PC-9 (cell line): ENCODE measurements at regions of chr5 and their contacts with region 1.

Region 1: DNA sequence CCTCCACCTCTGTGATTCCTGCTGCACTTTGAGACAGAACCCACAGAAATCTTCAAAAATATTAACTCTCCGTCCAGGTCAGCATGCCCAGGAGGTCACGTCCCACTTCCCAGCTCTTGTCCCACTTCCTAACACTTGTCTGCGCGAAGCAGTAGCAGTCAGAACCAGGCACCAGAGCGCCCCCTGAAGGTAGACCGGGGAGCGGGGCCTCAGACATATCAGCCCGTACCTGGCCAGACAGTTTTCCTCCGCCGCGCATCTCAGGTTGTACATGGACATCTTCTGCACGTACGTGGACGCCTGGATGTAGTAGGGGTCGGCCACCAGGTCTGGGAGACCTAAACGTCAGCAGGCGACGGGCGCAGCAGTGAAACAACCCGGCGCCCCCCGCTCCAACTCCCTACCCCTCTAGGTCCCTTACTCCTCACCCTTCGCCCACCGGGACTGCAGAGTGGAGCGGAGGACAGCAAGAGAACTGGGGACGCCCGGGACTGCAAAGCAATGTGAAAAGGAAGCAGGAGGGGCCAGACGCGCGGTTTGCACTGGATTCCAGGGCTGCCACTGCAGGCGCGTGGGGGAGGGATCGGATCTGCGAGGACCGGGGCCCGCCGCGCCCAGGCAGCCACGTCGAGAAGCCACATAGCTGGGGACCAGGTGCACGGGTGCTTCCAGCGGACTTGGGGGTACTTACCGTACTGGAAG is 1.2 kb downstream of the LOX start:
- DNase-seq: peak; percentile 42 to 71
- H3K4me3 ChIP-seq: peak overlapping the region; percentile 89
- H3K27ac ChIP-seq: 0 out of 2 replicates have a peak overlapping the region, but pooled peaks have one; percentile 13
- H3K4me1 ChIP-seq: peaks cover 25% of the 10 kb centered on the region
- H3K27me3 ChIP-seq: no peaks in the 10 kb centered on the region
- CTCF ChIP-seq: peak; percentile 77

Region 2: DNA sequence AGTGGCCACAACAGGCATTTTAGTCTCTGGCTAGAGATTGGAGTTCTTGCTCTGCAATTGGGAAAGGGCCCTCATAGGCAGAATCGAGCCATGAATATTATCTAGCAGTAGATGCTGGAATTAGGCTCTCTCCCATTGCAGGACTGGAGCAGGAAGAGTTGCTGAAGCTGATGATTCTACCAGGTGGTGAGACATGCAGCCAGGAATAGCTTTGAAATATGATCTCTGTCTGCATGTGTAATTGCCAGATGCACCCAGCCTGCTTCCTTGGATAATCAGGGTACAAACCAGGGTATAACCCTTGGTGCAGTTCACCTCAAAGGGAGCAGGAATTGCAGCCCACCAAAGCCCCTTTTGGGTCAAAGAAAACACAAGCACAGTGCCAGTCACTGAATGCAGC is 436.5 kb before region 1 on chr5:
- CTCF ChIA-PET with region 1: no interaction called
- POLR2A ChIA-PET with region 1: no interaction called
- intact Hi-C with region 1: no loop called
- DNase-seq: no peak
- H3K4me3 ChIP-seq: no peak overlapping the region
- H3K27ac ChIP-seq: no peak overlapping the region
- H3K4me1 ChIP-seq: no peaks in the 10 kb centered on the region
- H3K27me3 ChIP-seq: no peaks in the 10 kb centered on the region
- CTCF ChIP-seq: no peak

Region 3: GRCh38 chr5:121962347-121962670 is 114.5 kb before region 1 on chr5:
- CTCF ChIA-PET with region 1: no interaction called
- POLR2A ChIA-PET with region 1: interaction called, 6 read pairs
- intact Hi-C with region 1: loop called (anchors 1 kb)
- DNase-seq: no peak
- H3K4me3 ChIP-seq: peak overlapping the region; percentile 81
- H3K27ac ChIP-seq: peak overlapping the region; percentile 52
- H3K4me1 ChIP-seq: peaks cover 14% of the 10 kb centered on the region
- H3K27me3 ChIP-seq: no peaks in the 10 kb centered on the region
- CTCF ChIP-seq: no peak

Region 4: GRCh38 chr5:121982146-121982892 is 94.5 kb before region 1 on chr5:
- CTCF ChIA-PET with region 1: no interaction called
- POLR2A ChIA-PET with region 1: interaction called, 3 read pairs
- intact Hi-C with region 1: loop called (anchors 5 kb)
- DNase-seq: no peak
- H3K4me3 ChIP-seq: no peak overlapping the region
- H3K27ac ChIP-seq: no peak overlapping the region
- H3K4me1 ChIP-seq: no peaks in the 10 kb centered on the region
- H3K27me3 ChIP-seq: no peaks in the 10 kb centered on the region
- CTCF ChIP-seq: no peak

Region 5: GRCh38 chr5:122129306-122129705 is 52.5 kb after region 1 on chr5 and contains the start of gene ZNF474:
- CTCF ChIA-PET with region 1: no interaction called
- POLR2A ChIA-PET with region 1: no interaction called
- intact Hi-C with region 1: no loop called
- DNase-seq: peak; percentile 75 to 86
- H3K4me3 ChIP-seq: no peak within 1 kb of the TSS
- H3K27ac ChIP-seq: no peak within 1 kb of the TSS
- H3K4me1 ChIP-seq: 0 out of 2 replicates have a peak, but pooled peaks cover 4% of the 10 kb centered on the region
- H3K27me3 ChIP-seq: no peaks in the 10 kb centered on the region
- CTCF ChIP-seq: no peak
- total RNA-seq, gene ZNF474: not detected in 2 replicates

Region 6: GRCh38 chr5:122182491-122182921 is 105.7 kb after region 1 on chr5:
- CTCF ChIA-PET with region 1: no interaction called
- POLR2A ChIA-PET with region 1: no interaction called
- intact Hi-C with region 1: loop called (anchors 2 kb)
- DNase-seq: peak in 1 of 2 experiments; percentile 2
- H3K4me3 ChIP-seq: no peak overlapping the region
- H3K27ac ChIP-seq: no peak overlapping the region
- H3K4me1 ChIP-seq: no peaks in the 10 kb centered on the region
- H3K27me3 ChIP-seq: no peaks in the 10 kb centered on the region
- CTCF ChIP-seq: no peak

Region 7: DNA sequence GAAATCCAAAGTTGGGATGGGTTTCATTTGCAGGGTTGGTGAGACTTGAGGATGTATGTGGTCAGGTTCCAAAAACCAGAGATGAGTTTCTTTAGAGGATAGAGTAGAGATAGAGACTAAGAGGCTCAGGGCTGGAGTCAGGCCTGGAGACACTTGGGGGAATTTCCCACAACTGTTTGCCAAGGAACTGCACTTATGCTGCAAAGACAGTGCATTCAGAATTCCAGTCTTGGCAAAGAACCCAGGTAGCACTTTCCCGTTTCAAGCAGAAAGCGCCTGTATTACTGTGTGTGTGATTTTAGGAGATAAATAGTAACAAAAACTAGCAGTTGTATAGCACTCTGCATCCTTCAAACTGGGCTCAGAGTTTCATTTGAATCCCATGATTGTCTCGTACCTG is 290.6 kb after region 1 on chr5:
- CTCF ChIA-PET with region 1: no interaction called
- POLR2A ChIA-PET with region 1: no interaction called
- intact Hi-C with region 1: no loop called
- DNase-seq: no peak
- H3K4me3 ChIP-seq: no peak overlapping the region
- H3K27ac ChIP-seq: no peak overlapping the region
- H3K4me1 ChIP-seq: no peaks in the 10 kb centered on the region
- H3K27me3 ChIP-seq: no peaks in the 10 kb centered on the region
- CTCF ChIP-seq: no peak

Region 8: GRCh38 chr5:122478741-122479413 is 402.1 kb after region 1 on chr5:
- CTCF ChIA-PET with region 1: no interaction called
- POLR2A ChIA-PET with region 1: no interaction called
- intact Hi-C with region 1: no loop called
- DNase-seq: peak; percentile 3 to 94
- H3K4me3 ChIP-seq: no peak overlapping the region
- H3K27ac ChIP-seq: peak overlapping the region; percentile 56
- H3K4me1 ChIP-seq: peaks cover 21% of the 10 kb centered on the region
- H3K27me3 ChIP-seq: no peaks in the 10 kb centered on the region
- CTCF ChIP-seq: no peak